GM18951 (cell line): ENCODE measurements at regions of chr7 and their contacts with region 1.

Region 1: DNA sequence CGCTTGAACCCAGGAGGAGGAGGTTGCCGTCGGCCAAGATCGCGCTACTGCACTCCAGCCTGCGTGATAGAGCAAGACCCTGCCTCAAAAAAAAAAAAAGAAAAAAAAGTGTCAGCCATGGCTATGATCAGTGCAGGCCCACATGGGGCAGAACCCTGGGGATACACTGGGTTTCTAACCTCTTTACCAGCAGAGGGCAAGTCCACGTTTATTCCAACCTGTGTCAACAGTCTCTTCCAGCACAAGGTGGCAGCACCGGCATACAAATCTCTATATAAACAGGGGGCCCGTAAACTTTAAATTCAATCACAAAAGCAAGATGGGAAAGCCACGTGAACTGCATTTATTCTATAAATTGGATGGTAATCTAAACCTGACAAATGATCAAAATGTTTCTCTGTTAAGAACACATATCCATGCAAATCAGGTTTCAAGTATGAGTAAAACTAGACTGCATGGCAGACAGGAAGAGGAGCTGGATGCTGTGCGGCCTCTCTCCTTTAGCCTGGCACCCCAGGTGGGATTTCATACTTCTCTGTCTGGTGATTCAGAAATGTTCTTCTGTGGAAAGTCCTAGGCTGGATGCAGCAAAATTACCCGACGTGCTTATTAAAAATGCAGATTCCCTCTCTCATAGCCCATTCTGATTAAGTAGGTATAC is 60.0 kb upstream of the STEAP1B start:
- POLR2A ChIP-seq: no peak

Region 2: DNA sequence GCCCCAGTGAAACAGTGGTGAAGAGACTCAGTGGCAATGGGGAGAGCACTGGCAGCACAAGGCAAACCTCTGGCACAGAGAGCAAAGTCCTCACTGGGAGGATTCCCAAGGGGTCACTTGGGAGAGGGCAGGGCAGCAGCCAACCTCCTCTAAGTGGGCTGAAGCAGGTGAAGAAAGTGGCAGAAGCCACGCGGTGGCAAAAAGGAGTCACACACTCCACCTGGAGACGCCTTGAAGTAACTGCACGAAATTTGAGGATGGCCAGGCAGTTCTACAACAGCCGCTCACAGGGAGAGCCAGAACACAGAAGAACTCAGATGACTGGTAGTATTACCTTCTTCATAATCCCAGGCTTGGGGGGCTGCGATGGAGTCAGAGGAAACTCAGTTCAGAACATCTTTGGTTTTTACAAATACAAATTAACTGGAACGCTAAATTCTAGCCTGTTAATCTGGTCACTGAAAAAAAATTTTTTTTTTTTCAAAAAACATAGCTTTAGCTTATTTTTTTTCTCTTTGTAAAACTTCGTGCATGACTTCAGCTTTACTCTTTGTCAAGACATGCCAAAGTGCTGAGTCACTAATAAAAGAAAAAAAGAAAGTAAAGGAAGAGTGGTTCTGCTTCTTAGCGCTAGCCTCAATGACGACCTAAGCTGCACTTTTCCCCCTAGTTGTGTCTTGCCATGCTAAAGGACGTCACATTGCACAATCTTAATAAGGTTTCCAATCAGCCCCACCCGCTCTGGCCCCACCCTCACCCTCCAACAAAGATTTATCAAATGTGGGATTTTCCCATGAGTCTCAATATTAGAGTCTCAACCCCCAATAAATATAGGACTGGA is 166.6 kb after region 1 on chr7:
- in situ Hi-C with region 1: loop called (anchors 5 kb)
- POLR2A ChIP-seq: no peak

Region 3: DNA sequence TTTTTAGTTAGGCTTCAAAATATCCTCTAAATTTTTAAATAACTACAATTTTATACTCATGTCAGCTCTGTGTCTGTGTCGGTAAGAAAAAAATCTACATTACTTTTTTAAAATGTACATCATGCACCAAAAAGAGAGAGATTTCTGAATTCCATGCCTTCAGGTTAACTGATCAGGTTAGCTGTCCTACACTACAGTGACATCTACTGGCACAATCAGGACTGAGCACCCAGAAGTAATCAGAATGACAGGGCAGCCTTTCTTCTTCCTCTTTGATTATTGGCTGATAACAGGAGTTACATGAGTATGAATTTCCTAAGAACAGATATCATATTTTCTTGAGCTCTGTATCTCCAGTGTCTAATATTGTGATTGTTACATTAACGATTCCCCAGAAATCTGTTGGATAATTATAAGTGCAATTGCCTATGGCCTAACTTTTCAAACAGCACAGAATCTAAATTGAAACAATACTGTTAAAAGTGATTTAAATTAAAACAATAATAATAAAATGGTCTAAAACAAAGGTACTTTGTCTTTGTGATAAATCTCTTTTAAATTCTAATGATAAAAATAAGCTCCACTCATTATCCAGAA is 495.7 kb after region 1 on chr7:
- in situ Hi-C with region 1: loop called (anchors 10 kb)
- POLR2A ChIP-seq: no peak